Activated CD8-positive, alpha-beta T cell treated with anti-CD3 and anti-CD28 coated beads for 36 hours (primary cell): ENCODE measurements at regions of chr12 and their contacts with region 1.

Region 1: GRCh38 chr12:121005346-121005815 is 10.9 kb downstream of the C12orf43 start:
- DNase-seq: peak; percentile 76
- ATAC-seq: peak; percentile 93
- H3K4me3 Mint-ChIP-seq: no peak overlapping the region
- H3K27ac Mint-ChIP-seq: peak overlapping the region; percentile 48
- H3K4me1 Mint-ChIP-seq: no peaks in the 10 kb centered on the region
- H3K27me3 Mint-ChIP-seq: no peaks in the 10 kb centered on the region
- CTCF ChIP-seq: peak; percentile 75

Region 2: GRCh38 chr12:120598674-120599463 is 406.5 kb before region 1 on chr12:
- CTCF ChIA-PET with region 1: no interaction called
- POLR2A ChIA-PET with region 1: no interaction called
- intact Hi-C with region 1: no loop called
- DNase-seq: no peak
- ATAC-seq: peak; percentile 45
- H3K4me3 Mint-ChIP-seq: no peak overlapping the region
- H3K27ac Mint-ChIP-seq: no peak overlapping the region
- H3K4me1 Mint-ChIP-seq: no peaks in the 10 kb centered on the region
- H3K27me3 Mint-ChIP-seq: peaks cover 5% of the 10 kb centered on the region
- CTCF ChIP-seq: no peak

Region 3: DNA sequence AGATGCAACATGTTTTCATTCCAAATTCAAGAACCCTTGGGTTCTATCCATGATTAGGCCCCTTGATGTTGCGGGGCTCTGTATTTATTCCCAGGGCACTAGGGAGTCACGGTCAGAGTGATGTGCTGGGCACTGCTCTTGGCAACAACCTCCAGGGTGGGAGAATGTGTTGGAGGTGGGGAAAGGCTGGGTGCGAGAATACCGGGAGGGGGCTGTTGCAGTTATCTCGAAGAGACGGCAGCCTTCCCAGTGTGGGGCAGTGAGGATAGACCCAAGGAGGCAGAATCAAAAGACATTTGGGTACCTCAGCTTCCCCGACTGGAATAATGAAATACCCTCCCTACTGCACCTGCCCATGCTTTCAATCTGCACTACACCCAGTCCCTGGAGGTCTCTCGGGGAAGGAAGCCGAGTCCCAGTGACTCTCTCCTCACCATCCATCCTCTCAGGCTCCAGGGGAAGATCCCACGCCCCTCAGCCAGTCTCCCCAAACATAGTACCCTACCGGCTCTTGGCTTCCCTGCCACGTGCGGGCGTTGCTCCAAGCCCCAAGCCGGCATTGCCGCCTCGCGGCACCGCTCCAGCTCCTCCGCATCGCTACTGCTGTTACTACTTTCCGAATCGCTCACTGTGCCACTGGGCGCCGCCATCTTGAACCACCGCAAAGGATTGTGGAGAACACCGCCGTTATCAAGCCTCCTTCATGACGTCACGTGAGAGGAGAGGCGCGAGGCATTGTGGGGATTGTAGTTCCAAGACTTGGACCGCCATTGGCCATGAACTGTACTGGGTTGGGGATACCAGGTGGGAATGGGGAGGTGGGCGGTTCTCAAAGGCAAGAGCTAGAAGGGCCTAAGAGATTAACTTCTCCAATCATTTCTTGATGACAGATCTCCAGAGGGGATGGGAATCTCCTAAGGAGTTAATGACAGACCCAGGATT is 10.7 kb after region 1 on chr12 and contains the start of gene C12orf43:
- CTCF ChIA-PET with region 1: interaction called, 15 read pairs
- POLR2A ChIA-PET with region 1: interaction called, 3 read pairs
- intact Hi-C with region 1: no loop called
- DNase-seq: peak; percentile 98
- ATAC-seq: peak; percentile 98
- H3K4me3 Mint-ChIP-seq: peak within 1 kb of the TSS; percentile 98
- H3K27ac Mint-ChIP-seq: peak within 1 kb of the TSS; percentile 94
- H3K4me1 Mint-ChIP-seq: peaks cover 23% of the 10 kb centered on the region
- H3K27me3 Mint-ChIP-seq: no peaks in the 10 kb centered on the region
- CTCF ChIP-seq: no peak
- total RNA-seq, gene C12orf43: 19.8 to 20.7 TPM

Region 4: GRCh38 chr12:121050725-121051124 is 45.3 kb after region 1 on chr12:
- CTCF ChIA-PET with region 1: interaction called, 11 read pairs
- POLR2A ChIA-PET with region 1: no interaction called
- intact Hi-C with region 1: no loop called
- DNase-seq: no peak
- ATAC-seq: no peak
- H3K4me3 Mint-ChIP-seq: no peak overlapping the region
- H3K27ac Mint-ChIP-seq: no peak overlapping the region
- H3K4me1 Mint-ChIP-seq: no peaks in the 10 kb centered on the region
- H3K27me3 Mint-ChIP-seq: no peaks in the 10 kb centered on the region
- CTCF ChIP-seq: no peak

Region 5: DNA sequence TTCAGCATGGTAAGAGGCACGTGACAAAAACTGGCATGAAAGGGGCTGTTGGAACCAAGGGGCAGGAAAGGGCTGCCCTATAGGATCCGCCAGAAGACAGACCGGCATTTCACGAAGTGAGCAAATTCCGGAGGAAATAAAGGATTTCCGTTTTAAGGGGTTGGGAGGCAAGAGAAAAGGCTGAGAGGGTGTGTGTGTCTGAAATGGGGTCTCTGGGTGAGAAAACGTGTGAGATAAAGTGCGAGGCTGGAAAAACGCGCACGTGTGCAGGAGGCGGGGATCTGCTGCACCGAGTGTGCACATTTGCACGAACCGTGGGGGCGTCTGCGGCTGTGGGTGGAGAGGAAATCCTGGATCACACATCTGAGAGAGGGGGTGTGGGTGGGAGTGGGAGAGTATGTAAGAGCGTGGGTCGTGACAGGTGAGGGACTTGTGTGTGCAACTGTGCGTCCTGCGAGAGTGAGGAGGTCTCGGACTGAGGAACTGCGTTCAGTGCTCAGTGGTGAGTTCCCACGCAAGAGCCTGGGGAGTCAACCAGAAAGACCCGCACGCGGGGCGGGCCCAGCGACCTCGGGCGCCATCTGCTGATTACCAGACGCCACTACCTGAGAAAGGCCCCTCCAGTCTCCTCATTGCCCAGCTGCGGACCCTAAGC is 90.3 kb after region 1 on chr12:
- CTCF ChIA-PET with region 1: interaction called, 12 read pairs
- POLR2A ChIA-PET with region 1: no interaction called
- intact Hi-C with region 1: loop called (anchors 5 kb)
- DNase-seq: peak; percentile 87
- ATAC-seq: peak; percentile 91
- H3K4me3 Mint-ChIP-seq: peak overlapping the region; percentile 55
- H3K27ac Mint-ChIP-seq: no peak overlapping the region
- H3K4me1 Mint-ChIP-seq: peaks cover 39% of the 10 kb centered on the region
- H3K27me3 Mint-ChIP-seq: peaks cover 5% of the 10 kb centered on the region
- CTCF ChIP-seq: peak; percentile 90

Region 6: GRCh38 chr12:121110211-121110940 is 105.0 kb after region 1 on chr12:
- CTCF ChIA-PET with region 1: interaction called, 43 read pairs
- POLR2A ChIA-PET with region 1: no interaction called
- intact Hi-C with region 1: no loop called
- DNase-seq: peak; percentile 82
- ATAC-seq: peak; percentile 86
- H3K4me3 Mint-ChIP-seq: no peak overlapping the region
- H3K27ac Mint-ChIP-seq: no peak overlapping the region
- H3K4me1 Mint-ChIP-seq: peaks cover 2% of the 10 kb centered on the region
- H3K27me3 Mint-ChIP-seq: no peaks in the 10 kb centered on the region
- CTCF ChIP-seq: peak; percentile 97